Activated CD4-positive, alpha-beta memory T cell treated with anti-CD3 and anti-CD28 coated beads, Interleukin-2, amount 10 ng/mL, durations not matched to agents 7 days and 5 days (primary cell): ENCODE measurements at regions of chr11 and their contacts with region 1.

Region 1: DNA sequence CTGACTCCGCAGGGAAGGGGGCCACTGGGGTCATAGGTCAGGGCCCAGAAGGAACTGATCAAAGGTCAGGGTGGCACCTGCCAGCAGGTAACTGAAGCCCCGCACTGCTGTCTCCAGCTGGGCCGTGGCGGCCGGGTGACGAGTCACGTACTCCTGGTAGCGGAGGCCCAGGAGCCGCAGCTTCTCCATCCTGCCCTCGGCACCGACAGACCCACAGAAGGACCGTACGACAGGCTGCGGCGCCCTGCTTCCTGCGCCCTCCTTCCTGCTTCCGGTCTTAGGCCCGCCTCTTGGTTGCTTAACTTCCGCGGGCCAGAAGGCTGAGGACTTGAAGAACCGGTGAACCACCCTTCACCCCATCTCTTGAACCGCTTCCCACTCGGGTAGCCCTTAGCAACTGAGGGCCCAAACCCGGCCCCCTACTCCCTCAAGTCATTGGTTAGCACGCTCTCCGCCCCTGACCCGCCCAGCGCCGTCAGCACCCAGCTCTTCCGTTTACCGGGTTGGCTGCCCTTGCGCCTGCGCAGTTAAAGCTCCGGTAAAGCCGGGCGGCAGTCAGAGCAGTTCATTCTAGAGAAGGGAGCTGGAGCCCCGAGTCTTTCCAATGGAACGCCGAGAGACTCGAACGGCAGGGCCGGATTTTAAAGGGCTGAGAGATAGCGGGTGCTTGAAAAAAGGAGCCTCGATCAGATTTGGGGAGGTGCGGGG is at the start of gene PEX16:
- DNase-seq: peak; percentile 97
- H3K4me3 Mint-ChIP-seq: peak within 1 kb of the TSS; percentile 97
- H3K27ac Mint-ChIP-seq: peak within 1 kb of the TSS; percentile 97
- H3K4me1 Mint-ChIP-seq: peaks cover 41% of the 10 kb centered on the region
- H3K27me3 Mint-ChIP-seq: peaks cover 6% of the 10 kb centered on the region
- total RNA-seq, gene PEX16: 54.1 to 55.0 TPM

Region 2: GRCh38 chr11:45804761-45805304 is 112.9 kb before region 1 on chr11 and contains the start of gene SLC35C1:
- CTCF ChIA-PET with region 1: no interaction called
- POLR2A ChIA-PET with region 1: interaction called, 13 read pairs
- DNase-seq: peak; percentile 98
- H3K4me3 Mint-ChIP-seq: peak within 1 kb of the TSS; percentile 91
- H3K27ac Mint-ChIP-seq: peak within 1 kb of the TSS; percentile 83
- H3K4me1 Mint-ChIP-seq: peaks cover 44% of the 10 kb centered on the region
- H3K27me3 Mint-ChIP-seq: no peaks in the 10 kb centered on the region
- total RNA-seq, gene SLC35C1: 15.0 to 17.5 TPM

Region 3: DNA sequence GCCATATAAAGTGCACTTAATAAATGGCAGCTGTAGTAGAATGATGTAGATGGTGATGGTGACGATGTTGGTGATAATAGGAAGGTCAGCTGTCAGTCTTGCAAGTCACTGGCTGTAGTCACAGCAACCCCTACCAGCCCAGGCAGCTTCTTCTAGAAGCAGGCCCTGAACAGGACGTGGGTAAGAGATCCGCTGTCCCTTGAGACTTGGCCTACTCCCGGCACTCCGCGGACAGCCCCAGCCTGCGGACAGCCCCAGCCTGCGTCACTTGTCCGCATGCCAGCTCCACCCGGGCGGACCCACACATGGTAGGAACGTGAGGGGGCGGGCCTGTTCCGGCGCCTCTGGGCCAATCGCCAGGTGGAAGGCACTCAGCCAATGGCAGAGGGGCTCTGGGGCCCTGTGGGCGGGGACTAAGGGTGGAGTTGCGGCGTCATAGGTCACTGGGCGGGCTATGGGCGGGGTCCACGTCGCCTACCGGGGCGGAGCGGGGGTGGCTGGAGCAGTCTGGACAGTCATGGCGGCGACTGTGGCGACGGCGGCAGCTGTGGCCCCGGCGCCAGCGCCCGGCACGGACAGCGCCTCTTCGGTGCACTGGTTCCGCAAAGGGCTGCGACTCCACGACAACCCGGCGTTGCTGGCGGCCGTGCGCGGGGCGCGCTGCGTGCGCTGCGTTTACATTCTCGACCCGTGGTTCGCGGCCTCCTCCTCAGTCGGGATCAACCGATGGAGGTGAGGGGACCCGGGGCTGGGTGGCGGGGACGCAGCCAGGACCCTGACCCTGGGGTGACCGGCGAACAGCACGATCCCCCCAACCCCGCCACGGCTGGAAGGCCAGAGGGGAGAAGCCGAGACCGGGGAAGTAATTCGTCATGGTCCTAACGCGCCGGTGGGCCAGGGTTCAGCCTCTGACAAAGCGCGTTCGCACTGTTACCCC is 70.5 kb before region 1 on chr11 and contains the start of gene CRY2:
- CTCF ChIA-PET with region 1: interaction called, 10 read pairs
- POLR2A ChIA-PET with region 1: interaction called, 14 read pairs
- DNase-seq: peak; percentile 98
- H3K4me3 Mint-ChIP-seq: peak within 1 kb of the TSS; percentile 79
- H3K27ac Mint-ChIP-seq: peak within 1 kb of the TSS; percentile 72
- H3K4me1 Mint-ChIP-seq: peaks cover 54% of the 10 kb centered on the region
- H3K27me3 Mint-ChIP-seq: peaks cover 11% of the 10 kb centered on the region
- total RNA-seq, gene CRY2: 18.4 to 22.7 TPM

Region 4: DNA sequence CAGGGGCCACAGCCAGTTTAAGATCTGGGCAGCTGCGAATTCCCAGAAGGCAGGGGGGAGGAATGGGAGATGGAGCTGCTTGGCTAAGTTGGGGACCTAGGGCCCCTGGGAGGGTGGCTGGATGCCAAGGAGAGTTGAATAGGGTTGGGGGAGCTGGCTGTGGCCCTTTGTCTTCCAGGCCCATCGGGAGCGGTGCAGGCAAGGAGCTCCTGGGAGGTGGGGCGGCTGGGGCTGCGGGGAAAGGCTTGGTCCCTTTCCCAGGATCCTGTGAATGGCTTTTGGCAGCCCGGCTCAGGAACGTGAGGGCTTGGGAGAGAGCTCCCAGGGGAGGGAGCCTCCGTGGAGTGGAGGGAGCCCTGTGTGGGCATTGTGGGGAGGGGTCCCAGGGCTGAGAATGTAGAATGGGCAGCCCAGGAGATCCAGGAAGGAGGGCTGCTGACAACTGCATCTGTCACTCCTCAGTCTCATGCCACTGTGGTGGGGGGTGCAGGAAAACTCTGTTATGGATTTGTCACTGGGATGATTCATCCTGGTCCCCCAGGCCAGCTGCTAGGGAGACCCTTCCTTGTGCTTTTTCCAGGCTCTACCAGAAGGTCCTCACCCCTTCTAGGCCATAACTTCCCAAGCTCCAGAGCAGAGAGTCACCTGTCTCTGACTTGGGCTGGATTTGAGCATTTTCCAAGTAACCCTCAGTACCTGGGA is 16.7 kb before region 1 on chr11:
- CTCF ChIA-PET with region 1: interaction called, 4 read pairs
- POLR2A ChIA-PET with region 1: interaction called, 13 read pairs
- DNase-seq: no peak
- H3K4me3 Mint-ChIP-seq: peak overlapping the region; percentile 48
- H3K27ac Mint-ChIP-seq: no peak overlapping the region
- H3K4me1 Mint-ChIP-seq: peaks cover 12% of the 10 kb centered on the region
- H3K27me3 Mint-ChIP-seq: peaks cover 27% of the 10 kb centered on the region

Region 5: DNA sequence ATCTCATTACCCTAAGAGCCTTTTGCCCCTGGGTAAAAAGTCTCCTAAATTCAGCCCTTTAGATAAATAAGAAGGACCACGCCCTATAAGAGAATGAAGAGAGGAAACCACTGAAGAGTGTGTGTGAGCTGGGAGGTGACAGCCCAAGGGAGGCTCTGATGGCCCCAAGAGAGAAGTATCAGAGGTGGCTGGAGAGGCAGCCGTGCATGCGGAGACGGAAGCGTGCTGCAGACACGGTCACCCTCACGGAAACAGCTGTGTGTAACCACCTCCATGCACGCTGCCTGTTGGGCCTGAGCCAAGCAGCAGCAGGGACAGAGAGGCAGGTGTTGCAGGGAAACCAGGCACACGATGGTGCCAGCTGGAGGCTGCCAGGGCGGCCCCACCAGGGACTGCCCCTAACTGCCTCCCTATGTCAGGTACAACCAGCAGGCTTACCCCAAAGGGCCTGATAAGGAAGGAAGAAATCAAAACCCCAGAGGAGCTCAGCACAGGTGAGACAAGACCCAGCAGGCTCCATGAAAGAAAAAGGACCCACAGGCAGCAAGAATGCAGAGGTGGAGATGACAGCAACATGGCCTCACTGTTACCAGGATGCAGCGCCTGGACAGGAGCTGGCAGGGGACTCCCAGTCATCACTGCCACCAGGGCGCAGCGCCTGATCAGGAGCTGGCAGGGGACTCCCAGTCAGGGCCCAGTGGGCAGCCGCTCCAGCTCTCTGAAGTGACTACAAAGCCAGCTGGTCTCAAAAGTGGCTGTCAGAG is 12.4 kb after region 1 on chr11:
- CTCF ChIA-PET with region 1: interaction called, 11 read pairs
- POLR2A ChIA-PET with region 1: interaction called, 78 read pairs
- DNase-seq: peak; percentile 73
- H3K4me3 Mint-ChIP-seq: peak overlapping the region; percentile 50
- H3K27ac Mint-ChIP-seq: peak overlapping the region; percentile 95
- H3K4me1 Mint-ChIP-seq: peaks cover 35% of the 10 kb centered on the region
- H3K27me3 Mint-ChIP-seq: no peaks in the 10 kb centered on the region

Region 6: GRCh38 chr11:45948356-45948755 is 30.6 kb after region 1 on chr11:
- CTCF ChIA-PET with region 1: no interaction called
- POLR2A ChIA-PET with region 1: no interaction called
- DNase-seq: no peak
- H3K4me3 Mint-ChIP-seq: no peak overlapping the region
- H3K27ac Mint-ChIP-seq: no peak overlapping the region
- H3K4me1 Mint-ChIP-seq: no peaks in the 10 kb centered on the region
- H3K27me3 Mint-ChIP-seq: no peaks in the 10 kb centered on the region

Region 7: DNA sequence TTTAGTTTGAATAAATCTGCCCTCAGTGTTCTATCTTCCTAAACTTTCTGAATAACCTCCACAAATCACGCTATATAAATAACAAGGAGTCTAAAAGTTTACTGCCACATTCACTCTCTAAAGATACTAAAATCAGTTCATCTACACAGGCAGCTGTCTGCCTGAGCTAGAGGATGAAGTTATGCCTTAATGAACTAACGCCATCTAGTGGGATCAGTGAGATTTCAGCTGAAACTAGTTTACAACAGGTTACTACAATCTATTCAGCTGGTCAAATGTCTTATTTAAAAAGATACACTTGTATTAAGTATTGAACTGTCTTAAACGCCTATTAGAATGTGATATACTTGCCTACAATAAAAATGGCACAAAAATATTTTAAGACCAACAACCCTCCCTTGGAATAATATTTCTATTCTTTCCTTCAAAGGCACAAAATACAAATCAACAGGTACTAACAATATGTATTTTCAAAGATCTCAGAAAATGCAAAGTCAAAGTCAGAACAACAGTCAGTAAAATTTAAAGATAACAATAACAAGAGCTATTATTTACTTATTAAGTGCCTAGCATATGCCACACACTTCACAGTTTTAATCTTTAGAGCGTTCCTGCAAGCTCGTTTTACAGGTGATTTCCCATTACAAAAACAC is 88.8 kb after region 1 on chr11:
- CTCF ChIA-PET with region 1: interaction called, 11 read pairs
- POLR2A ChIA-PET with region 1: no interaction called
- DNase-seq: no peak
- H3K4me3 Mint-ChIP-seq: no peak overlapping the region
- H3K27ac Mint-ChIP-seq: no peak overlapping the region
- H3K4me1 Mint-ChIP-seq: peaks cover 2% of the 10 kb centered on the region
- H3K27me3 Mint-ChIP-seq: no peaks in the 10 kb centered on the region